ENCODE measurements at regions of chr17 and their contacts with region 1.

Region 1: DNA sequence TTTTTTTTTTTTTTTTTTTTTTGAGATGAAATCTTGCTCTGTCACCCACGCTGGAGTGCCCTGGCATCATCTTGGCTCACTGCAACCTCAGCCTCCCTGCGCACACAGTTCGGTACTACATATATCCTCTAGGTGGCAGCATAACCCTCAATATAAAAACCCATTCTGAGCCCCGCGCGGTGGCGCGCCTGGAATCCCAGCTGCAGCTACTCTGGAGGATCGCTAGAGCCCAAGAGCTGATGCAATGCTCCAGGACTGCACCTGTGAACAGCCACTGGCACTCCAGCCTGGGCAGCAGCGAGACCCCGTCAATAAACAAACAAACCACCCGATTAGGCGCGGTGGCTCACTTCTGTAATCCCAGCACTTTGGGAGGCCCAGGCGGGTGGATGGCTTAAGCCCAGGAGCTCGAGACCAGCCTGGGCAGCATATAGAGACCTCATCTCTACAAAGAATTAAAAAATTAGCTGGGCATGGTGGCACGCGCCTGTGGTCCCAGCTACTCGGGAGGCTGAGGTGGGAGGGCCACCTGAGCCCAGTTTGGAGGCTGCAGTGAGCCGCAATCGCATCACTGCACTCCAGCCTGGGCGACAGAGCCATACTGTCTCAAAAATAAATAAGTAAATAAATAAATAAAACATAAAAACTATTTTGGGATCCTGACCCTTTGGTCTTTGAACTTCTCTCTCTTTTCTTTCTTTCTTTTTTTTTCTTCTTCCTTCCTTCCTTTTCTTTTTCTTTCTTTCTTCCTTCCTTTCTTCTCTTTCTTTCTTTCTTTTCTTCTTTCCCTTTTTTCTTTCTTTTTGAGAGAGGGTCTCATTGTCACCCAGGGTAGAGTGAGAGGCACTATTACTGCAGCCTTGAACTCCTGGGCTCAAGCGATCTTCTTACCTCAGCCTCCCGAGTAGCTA is 15.4 kb upstream of the AKAP10 start:
- DNase-seq: peak; percentile 93
- H3K4me3 ChIP-seq: no peak overlapping the region
- H3K27ac ChIP-seq: no peak overlapping the region
- H3K4me1 ChIP-seq: no peaks in the 10 kb centered on the region
- H3K27me3 ChIP-seq: peaks cover 16% of the 10 kb centered on the region

Region 2: DNA sequence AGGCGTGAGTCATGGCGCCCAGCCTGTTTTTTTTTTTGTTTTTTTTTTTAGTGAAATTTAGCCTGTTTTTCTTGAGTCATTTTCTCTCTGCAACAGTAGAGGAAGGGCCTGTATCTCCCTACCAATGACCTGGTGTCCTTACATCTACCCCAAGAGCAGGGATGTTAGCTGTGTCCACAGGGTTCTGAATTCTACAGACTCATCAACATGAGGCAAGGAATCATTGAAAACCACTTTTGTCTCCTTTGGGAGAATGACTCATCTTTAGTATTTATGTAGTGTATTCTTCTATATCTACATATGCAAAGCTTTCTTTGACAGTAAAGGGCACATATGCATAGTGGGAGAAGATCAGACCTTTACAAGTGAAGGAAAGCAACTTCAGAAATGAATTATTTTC is 121.4 kb after region 1 on chr17:
- in situ Hi-C with region 1: loop called (anchors 5 kb)
- DNase-seq: peak; percentile 27
- H3K4me3 ChIP-seq: no peak overlapping the region
- H3K27ac ChIP-seq: no peak overlapping the region
- H3K4me1 ChIP-seq: no peaks in the 10 kb centered on the region
- H3K27me3 ChIP-seq: peaks cover 28% of the 10 kb centered on the region

Region 3: GRCh38 chr17:20206068-20206467 is 213.0 kb after region 1 on chr17:
- in situ Hi-C with region 1: loop called (anchors 25 kb)
- DNase-seq: peak; percentile 43
- H3K4me3 ChIP-seq: peak overlapping the region; percentile 1; the same call in 1 of the 2 replicates
- H3K27ac ChIP-seq: no peak overlapping the region
- H3K4me1 ChIP-seq: peaks cover 31% of the 10 kb centered on the region
- H3K27me3 ChIP-seq: peaks cover 3% of the 10 kb centered on the region; the same call in 1 of the 2 replicates

Region 4: DNA sequence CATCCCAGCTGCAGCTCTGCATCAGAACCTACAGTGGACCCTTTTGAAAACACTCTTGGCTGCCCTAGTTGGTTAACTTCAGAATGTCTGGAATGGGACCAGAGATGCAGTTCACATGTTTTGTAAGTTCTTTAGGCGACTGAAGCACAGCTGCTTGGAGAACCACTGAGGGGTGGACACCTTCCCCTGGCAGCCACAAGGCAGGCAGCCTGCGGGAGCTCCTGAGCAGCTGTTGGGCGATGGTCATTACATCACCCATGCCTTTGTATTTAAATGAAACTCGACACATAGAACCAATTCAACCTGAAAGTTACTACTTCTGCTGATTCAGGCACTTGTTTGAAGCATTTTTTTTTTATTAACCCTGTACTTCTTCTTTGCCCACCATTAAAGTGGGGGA is 322.8 kb after region 1 on chr17:
- in situ Hi-C with region 1: loop called (anchors 10 kb)
- DNase-seq: no peak
- H3K4me3 ChIP-seq: no peak overlapping the region
- H3K27ac ChIP-seq: no peak overlapping the region
- H3K4me1 ChIP-seq: no peaks in the 10 kb centered on the region
- H3K27me3 ChIP-seq: no peaks in the 10 kb centered on the region